H1 (cell line): ENCODE measurements at regions of chr19 and their contacts with region 1.

Region 1: DNA sequence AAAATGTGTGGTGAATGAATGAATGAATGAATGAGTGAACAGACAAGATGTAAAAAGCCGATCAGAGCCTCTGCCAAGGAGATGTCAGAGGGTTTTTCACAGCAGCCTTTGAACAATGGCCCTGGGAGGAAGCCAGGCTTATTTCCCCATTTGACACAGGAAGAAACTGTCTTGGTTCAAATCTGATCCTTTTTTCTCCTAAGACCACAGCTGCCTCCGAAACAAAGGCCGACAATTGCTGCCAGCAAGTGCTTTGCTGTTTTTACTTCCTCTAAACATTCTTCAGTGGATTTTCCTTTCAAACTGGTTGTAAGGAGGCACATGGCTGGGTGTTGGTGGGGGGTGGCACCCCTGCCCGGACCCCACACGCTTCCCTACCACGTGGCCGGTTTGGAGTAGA is 44.2 kb upstream of the HOMER3 start:
- DNase-seq: no peak
- H3K4me3 ChIP-seq: no peak overlapping the region
- H3K27ac ChIP-seq: no peak overlapping the region
- H3K4me1 ChIP-seq: peaks cover 0 to 5% (median 0%) of the 10 kb centered on the region in 4 experiments; a peak in 1 of 7 replicates
- H3K27me3 ChIP-seq: peaks cover 0 to 2% (median 0%) of the 10 kb centered on the region in 4 experiments; a peak in 1 of 7 replicates
- CTCF ChIP-seq: no peak
- EP300 ChIP-seq: no peak
- POLR2A ChIP-seq: no peak
- RAD21 ChIP-seq: no peak

Region 2: GRCh38 chr19:18895038-18895823 is 90.0 kb before region 1 on chr19:
- CTCF ChIA-PET with region 1: interaction called, 16 read pairs
- POLR2A ChIA-PET with region 1: interaction called, 6 read pairs
- DNase-seq: peak in 1 of 2 experiments; percentile 80
- H3K4me3 ChIP-seq: peak overlapping the region; percentile 42 to 79 (median 62)
- H3K27ac ChIP-seq: no peak overlapping the region
- H3K4me1 ChIP-seq: peaks cover 0 to 13% (median 5%) of the 10 kb centered on the region in 4 experiments; a peak in 5 of 7 replicates
- H3K27me3 ChIP-seq: peaks cover 0 to 13% (median 8%) of the 10 kb centered on the region in 4 experiments; a peak in 4 of 7 replicates
- CTCF ChIP-seq: peak; percentile 66 to 78 (median 74)
- EP300 ChIP-seq: no peak
- POLR2A ChIP-seq: no peak
- RAD21 ChIP-seq: peak; percentile 59 to 73

Region 3: DNA sequence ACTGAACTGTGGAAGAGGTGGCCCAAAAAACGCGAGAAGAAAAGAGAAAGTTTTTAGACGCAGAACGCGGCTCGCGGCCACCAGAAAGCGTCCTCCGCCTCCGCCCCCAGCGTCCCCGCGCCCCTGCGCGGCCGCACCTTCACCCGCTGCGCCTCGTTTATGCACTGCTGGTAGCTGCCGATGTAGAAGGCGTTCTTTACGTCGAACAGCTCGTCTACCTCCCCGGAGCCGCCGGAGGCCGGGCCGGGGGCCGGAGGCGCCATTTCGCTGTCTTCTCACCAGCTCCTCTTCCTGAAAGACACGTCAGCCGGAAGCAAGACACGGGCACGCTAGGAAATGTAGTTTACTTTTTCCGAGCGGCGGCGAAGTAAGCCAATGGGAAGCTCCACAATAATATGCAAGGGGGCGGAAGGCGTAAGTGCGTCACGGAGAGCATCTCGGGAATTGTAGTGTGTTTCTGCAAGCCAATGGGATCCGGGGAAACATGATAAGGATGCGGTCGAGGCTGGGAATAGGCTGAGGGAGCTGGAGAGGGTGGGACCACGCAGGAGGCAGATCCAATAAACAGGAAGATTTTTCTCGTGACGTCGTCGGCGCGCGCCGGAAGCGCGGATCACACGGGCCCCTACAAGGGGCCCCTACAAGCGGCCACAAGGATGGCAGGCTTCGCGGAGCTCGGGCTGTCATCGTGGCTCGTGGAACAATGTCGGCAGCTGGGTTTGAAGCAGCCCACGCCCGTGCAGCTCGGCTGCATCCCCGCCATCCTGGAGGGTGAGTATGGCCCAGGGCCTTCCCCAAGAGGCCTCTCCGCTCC is 66.0 kb before region 1 on chr19 and contains the starts of genes COPE and DDX49:
- CTCF ChIA-PET with region 1: interaction called, 9 read pairs
- POLR2A ChIA-PET with region 1: interaction called, 10 read pairs
- DNase-seq: peak; percentile 97
- H3K4me3 ChIP-seq: peak within 1 kb of the TSS; percentile 82 to 100 (median 100)
- H3K27ac ChIP-seq: peak within 1 kb of the TSS; percentile 64
- H3K4me1 ChIP-seq: peaks cover 0 to 9% (median 6%) of the 10 kb centered on the region in 4 experiments; a peak in 6 of 7 replicates
- H3K27me3 ChIP-seq: no peaks in the 10 kb centered on the region
- CTCF ChIP-seq: no peak; a peak in 1 of 4 replicates
- EP300 ChIP-seq: no peak
- POLR2A ChIP-seq: peak in 1 of 2 experiments; percentile 97; a peak in 2 of 3 replicates
- RAD21 ChIP-seq: no peak
- total RNA-seq, gene COPE: 178 and 190 TPM in 2 replicates
- total RNA-seq, gene DDX49: 41.3 and 52.3 TPM in 2 replicates

Region 4: DNA sequence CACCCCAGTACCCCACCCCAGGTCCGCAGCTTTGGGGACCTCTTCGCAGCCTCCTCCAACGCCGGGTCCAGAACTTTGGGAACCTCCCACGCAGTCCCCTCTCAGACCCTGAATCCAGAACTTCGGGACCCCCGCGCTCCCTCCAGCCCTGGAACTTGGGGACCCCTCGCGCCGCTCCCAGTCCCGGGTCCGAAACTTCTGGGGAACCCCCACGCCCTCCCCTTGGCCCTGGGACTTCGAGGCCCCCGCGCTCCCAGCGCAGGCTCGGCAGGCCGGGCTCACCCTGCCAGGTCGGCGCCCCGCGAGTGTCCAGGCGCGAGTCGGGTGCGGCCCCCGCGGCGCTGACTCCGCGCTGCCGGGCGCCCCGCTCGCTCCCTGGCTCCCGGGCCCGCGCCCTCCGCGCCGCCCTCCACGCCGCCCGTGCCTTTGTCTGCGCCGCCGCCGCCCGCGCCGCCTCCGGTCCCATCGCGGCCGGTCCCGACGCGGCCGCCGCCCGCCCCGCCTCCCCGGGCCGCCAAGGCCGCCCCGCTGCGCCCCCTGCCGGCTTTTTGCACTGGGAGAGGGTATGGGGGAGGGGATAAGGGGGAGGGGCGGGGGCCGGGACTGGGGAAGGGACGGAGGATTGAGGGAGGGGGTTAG is 44.4 kb before region 1 on chr19 and contains the start of gene HOMER3:
- CTCF ChIA-PET with region 1: interaction called, 10 read pairs
- POLR2A ChIA-PET with region 1: interaction called, 5 read pairs
- DNase-seq: peak in 1 of 2 experiments; percentile 85
- H3K4me3 ChIP-seq: peak within 1 kb of the TSS; percentile 45 to 77 (median 66)
- H3K27ac ChIP-seq: no peak within 1 kb of the TSS; the same call in 1 of the 2 replicates
- H3K4me1 ChIP-seq: peaks cover 5 to 18% (median 9%) of the 10 kb centered on the region in 4 experiments
- H3K27me3 ChIP-seq: no peaks in the 10 kb centered on the region
- CTCF ChIP-seq: peak in 2 of 3 experiments; percentile 40 to 42; a peak in 3 of 4 replicates
- EP300 ChIP-seq: no peak
- POLR2A ChIP-seq: no peak
- RAD21 ChIP-seq: no peak; a peak in 1 of 4 replicates
- total RNA-seq, gene HOMER3: 28.3 and 33.2 TPM in 2 replicates

Region 5: DNA sequence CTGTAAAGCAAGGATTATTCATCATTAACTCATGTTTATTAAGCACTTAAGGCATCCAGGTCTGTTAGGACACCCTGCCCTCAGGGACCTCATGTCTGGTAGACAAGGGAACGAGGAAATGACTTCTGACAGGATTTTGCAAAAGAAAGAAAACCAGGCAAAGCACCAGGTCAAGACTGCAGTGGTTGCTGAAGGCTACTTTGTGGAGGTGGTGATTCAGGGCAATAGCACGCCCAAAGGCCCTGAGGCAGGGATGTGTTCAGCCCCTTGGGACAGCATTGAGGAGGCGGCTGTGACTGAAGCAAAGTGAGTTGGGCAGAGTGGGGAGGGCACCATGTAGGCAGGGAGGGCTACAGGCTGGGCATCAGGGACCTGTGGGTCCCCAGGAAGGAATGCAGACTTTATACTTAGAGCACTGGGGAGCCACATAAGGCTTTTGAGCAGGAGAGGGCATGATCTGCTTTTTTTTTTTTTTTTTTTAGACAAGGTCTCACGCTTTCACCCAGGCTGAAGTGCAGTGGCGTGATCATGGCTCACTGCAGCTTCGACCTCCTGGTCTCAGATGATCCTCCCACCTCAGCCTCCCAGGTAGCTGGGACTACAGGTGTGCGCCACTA is 33.5 kb before region 1 on chr19:
- CTCF ChIA-PET with region 1: interaction called, 11 read pairs
- POLR2A ChIA-PET with region 1: interaction called, 4 read pairs
- DNase-seq: no peak
- H3K4me3 ChIP-seq: no peak overlapping the region
- H3K27ac ChIP-seq: no peak overlapping the region
- H3K4me1 ChIP-seq: no peaks in the 10 kb centered on the region
- H3K27me3 ChIP-seq: no peaks in the 10 kb centered on the region
- CTCF ChIP-seq: no peak
- EP300 ChIP-seq: no peak
- POLR2A ChIP-seq: no peak
- RAD21 ChIP-seq: no peak

Region 6: GRCh38 chr19:18995804-18996241 is 10.6 kb after region 1 on chr19:
- CTCF ChIA-PET with region 1: interaction called, 40 read pairs
- POLR2A ChIA-PET with region 1: interaction called, 9 read pairs
- DNase-seq: peak; percentile 47 to 59
- H3K4me3 ChIP-seq: no peak overlapping the region
- H3K27ac ChIP-seq: no peak overlapping the region
- H3K4me1 ChIP-seq: peaks cover 0 to 7% (median 3%) of the 10 kb centered on the region in 4 experiments; a peak in 5 of 7 replicates
- H3K27me3 ChIP-seq: no peaks in the 10 kb centered on the region
- CTCF ChIP-seq: peak; percentile 60 to 84 (median 73)
- EP300 ChIP-seq: no peak
- POLR2A ChIP-seq: peak in 1 of 2 experiments; percentile 17; a peak in 1 of 3 replicates
- RAD21 ChIP-seq: peak; percentile 44 to 58